Heart right ventricle (tissue), 16 donors: ENCODE measurements at regions of chr19 and their contacts with region 1.

Region 1: GRCh38 chr19:9796113-9796773 is 22.6 kb downstream of the FBXL12 start:
- DNase-seq: peak; percentile 60 to 89
- ATAC-seq: peak in 6 of 8 donors; percentile 10 to 37 (median 31)
- H3K4me3 ChIP-seq: no peak overlapping the region
- H3K27ac ChIP-seq: peak overlapping the region in 1 of 10 donors; percentile 11
- H3K4me1 ChIP-seq: peaks cover 0 to 17% (median 3%) of the 10 kb centered on the region in 9 donors
- H3K27me3 ChIP-seq: no peaks in the 10 kb centered on the region
- CTCF ChIP-seq: peak; percentile 61 to 90 (median 82)

Region 2: GRCh38 chr19:8832132-8833021 is 963.9 kb before region 1 on chr19 and contains the starts of genes MBD3L1 and ZNF558:
- intact Hi-C with region 1: loop called in 1 of 10 experiments (anchors 10 kb)
- DNase-seq: peak; percentile 99
- ATAC-seq: peak; percentile 94 to 99 (median 97)
- H3K4me3 ChIP-seq: peak within 1 kb of the TSS; percentile 67 to 97 (median 85)
- H3K27ac ChIP-seq: peak within 1 kb of the TSS; percentile 70 to 98 (median 93)
- H3K4me1 ChIP-seq: peaks cover 0 to 16% (median 9%) of the 10 kb centered on the region in 9 donors
- H3K27me3 ChIP-seq: no peaks in the 10 kb centered on the region
- CTCF ChIP-seq: peak in 8 of 9 donors; percentile 19 to 73 (median 49)
- total RNA-seq, gene MBD3L1: not detected
- total RNA-seq, gene ZNF558: 8.3 to 14.3 (median 11.8) TPM

Region 3: GRCh38 chr19:9205501-9206113 is 590.6 kb before region 1 on chr19:
- intact Hi-C with region 1: loop called (anchors 1 to 10 kb)
- DNase-seq: peak; percentile 64 to 67
- ATAC-seq: peak in 7 of 8 donors; percentile 58 to 74 (median 69)
- H3K4me3 ChIP-seq: peak overlapping the region in 7 of 10 donors; percentile 27 to 48 (median 42)
- H3K27ac ChIP-seq: no peak overlapping the region
- H3K4me1 ChIP-seq: peaks cover 0 to 4% (median 0%) of the 10 kb centered on the region in 9 donors
- H3K27me3 ChIP-seq: peaks cover 0 to 42% (median 18%) of the 10 kb centered on the region in 7 donors
- CTCF ChIP-seq: peak; percentile 55 to 95 (median 90)

Region 4: GRCh38 chr19:9435279-9436268 is 360.7 kb before region 1 on chr19 and contains the start of gene ZNF266:
- intact Hi-C with region 1: loop called in 1 of 10 experiments (anchors 10 kb)
- DNase-seq: peak; percentile 89
- ATAC-seq: peak; percentile 90 to 98 (median 96)
- H3K4me3 ChIP-seq: peak within 1 kb of the TSS; percentile 60 to 94 (median 78)
- H3K27ac ChIP-seq: peak within 1 kb of the TSS; percentile 70 to 98 (median 90)
- H3K4me1 ChIP-seq: peaks cover 0 to 32% (median 17%) of the 10 kb centered on the region in 9 donors
- H3K27me3 ChIP-seq: no peaks in the 10 kb centered on the region
- CTCF ChIP-seq: peak; percentile 50 to 80 (median 62)
- total RNA-seq, gene ZNF266: 4.8 to 9.1 (median 7.8) TPM

Region 5: DNA sequence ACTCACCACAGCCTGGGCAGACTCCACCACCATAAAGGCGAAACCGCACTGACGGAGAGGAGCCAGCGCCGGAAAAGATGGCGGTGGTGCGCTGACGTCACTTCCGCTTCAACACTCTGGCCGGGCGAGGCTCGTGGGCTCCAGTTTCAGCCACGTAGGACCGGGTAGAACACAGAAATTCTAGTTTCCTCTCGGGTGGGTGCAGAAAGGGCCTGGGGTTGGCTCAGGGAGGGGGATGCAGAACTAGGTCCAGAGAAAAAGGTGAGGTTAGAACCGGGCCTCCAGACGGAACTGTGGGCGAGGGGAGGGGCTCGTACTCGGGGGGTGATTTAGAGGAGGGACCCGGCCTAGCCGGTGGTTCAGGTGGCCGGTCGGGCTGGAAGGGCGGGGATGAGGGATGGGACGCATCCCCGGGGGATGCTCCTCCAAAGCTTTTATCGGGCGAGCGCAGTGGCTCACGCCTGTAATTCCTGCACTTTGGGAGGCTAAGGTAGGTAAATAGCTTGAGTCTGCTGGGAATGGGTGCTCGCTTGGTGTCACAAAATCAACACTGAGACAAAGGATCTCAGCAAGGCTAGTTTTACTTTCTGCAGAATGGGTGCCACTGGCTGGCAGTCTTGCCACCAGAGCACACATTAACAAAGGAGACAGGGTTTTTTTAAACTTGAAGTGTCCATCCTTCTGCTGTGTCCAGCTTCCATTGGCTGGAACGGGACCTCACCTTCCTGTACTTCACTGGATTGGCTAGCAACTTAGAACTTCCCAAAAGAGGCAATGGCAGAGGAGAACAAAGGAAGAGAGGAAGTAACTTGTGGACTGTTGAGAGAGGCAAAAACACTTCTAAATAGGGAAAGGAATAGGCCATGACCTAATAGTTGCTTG is 174.8 kb before region 1 on chr19 and contains the start of gene ZNF561:
- intact Hi-C with region 1: loop called (anchors 1 to 5 kb)
- DNase-seq: peak; percentile 87 to 89
- ATAC-seq: peak; percentile 93 to 97 (median 96)
- H3K4me3 ChIP-seq: peak within 1 kb of the TSS; percentile 41 to 97 (median 84)
- H3K27ac ChIP-seq: peak within 1 kb of the TSS; percentile 79 to 98 (median 94)
- H3K4me1 ChIP-seq: peaks cover 3 to 40% (median 23%) of the 10 kb centered on the region in 9 donors
- H3K27me3 ChIP-seq: no peaks in the 10 kb centered on the region
- CTCF ChIP-seq: no peak
- total RNA-seq, gene ZNF561: 19.1 to 26.6 (median 23.7) TPM

Region 6: DNA sequence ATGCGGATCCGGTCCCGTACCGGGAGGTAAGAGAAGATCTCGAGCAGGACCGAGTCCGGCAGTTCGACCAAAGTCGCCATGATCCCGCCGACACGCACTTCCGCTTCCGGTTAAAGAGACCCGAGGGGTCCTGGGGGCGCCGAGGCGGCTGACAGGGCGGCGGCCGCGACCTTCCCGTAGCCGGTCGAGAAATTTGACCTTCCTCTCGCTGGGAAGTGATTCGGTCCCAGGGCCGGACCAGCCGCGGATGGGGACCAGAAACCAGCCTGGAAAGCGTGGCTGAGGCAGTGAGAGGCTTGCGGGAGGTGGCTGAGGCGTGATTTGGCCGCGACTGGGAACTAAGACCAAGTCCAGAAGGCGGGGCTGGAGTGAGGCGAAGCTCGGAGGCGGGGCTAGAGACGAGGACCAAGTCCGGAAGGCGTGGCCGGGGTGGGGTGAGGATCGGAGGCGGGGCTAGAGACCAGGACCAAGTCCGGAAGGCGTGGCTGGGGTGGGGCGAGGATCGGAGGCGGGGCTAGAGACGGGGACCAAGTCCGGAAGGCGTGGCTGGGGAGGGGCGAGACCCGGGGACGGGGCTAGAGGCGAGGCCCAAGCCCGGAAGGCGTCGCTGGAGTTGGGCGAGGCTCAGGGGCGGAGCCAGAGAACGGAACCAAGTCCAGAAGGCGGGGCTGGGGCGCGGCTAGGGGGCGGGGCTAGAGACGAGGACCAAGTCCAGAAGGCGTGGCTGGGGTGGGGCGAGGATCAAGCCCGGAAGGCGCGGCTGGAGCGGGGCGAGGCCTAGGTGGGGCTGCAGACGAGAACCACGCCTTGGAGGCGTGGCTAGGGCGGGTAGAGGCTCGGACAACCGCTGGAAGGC is 22.7 kb after region 1 on chr19 and contains the start of gene FBXL12:
- intact Hi-C with region 1: loop called in 4 of 10 experiments (anchors 1 to 2 kb)
- DNase-seq: peak; percentile 100
- ATAC-seq: peak; percentile 94 to 97 (median 95)
- H3K4me3 ChIP-seq: peak within 1 kb of the TSS; percentile 76 to 100 (median 97)
- H3K27ac ChIP-seq: peak within 1 kb of the TSS; percentile 93 to 99 (median 96)
- H3K4me1 ChIP-seq: peaks cover 3 to 27% (median 22%) of the 10 kb centered on the region in 9 donors
- H3K27me3 ChIP-seq: no peaks in the 10 kb centered on the region
- CTCF ChIP-seq: no peak
- total RNA-seq, gene FBXL12: 10.5 to 13.8 (median 11.5) TPM